Spleen (tissue), 13 donors: ENCODE measurements at regions of chr9 and their contacts with region 1.

Region 1: DNA sequence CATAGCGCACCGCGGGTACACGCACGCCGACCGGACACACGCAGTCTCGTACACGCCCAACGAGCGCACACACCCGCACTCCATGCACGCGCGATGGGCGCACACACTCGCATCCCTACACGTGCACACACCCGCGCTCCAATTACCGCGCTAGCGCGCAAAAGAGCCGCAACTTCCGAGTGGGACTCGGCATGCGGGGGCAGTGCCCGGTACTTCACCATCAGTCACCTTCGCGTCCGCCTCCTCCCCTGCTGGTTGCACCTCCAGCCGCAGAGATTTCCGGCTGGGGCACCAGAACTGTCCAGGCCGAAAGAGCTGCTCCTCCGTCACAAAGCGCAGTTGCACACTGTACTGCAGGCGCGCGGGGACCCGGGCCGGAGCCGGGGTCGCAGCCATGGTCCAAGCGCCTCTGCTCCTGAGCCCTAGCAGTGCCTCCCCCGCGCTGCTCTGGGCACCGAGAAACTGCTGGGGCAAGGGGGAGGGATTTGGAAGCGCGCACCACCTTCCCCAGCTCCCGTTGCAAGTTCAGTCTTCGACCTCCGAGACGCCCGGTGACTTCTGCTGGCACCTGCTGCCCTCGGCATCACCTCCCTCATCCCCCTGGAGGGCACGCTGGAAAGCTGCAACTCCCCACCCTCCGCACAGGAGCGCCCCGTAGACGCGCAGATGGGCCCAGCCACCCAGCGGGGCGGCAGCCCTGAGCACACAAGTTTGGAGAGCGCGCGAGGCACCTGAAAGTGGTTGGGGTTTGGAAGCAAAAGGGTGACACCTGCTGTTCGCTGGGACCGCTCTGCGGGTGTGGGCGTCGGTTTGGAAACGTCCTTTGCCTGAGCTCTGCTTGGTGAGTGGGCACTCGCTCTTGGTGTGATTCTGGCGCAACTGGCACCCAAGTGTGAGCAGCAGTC is 337.4 kb upstream of the PUM3 start:
- DNase-seq: no peak
- H3K4me3 ChIP-seq: peak overlapping the region in 4 of 8 donors; percentile 11 to 42 (median 16)
- H3K27ac ChIP-seq: no peak overlapping the region
- H3K4me1 ChIP-seq: peaks cover 3 to 15% (median 10%) of the 10 kb centered on the region in 6 donors
- H3K27me3 ChIP-seq: peaks cover 0 to 71% (median 21%) of the 10 kb centered on the region in 7 donors
- CTCF ChIP-seq: peak in 2 of 11 experiments; percentile 8 to 15
- POLR2A ChIP-seq: no peak

Region 2: DNA sequence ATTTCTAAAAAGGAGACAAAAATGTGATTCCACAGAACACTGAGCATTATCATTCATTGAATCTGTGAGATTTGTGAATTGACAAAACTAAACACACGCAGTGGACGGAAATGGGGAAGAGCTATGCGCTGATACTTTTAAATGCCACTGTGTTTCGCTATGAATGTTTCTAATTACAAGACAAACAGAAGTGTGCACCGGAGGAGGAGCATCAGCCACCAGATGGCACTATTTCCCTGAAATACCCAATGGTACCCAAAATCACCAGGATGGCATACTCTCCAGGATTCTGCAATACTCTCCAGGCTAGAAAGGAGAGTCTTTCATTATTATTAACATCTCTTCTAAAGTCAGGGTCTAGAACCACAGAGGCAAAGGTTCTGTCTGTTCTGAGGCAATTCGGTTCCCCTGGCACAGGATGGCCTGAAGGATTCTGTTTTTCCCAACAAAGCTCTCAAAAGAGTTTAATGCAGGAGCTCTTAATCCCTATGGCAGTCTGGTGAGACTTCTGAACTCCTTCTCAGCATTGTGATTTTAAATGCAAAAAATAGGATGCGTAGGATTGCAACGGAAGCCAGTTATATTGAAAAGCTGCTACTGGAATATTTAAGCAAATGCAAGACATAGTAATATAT is 323.6 kb before region 1 on chr9:
- intact Hi-C with region 1: loop called (anchors 5 kb)
- DNase-seq: no peak
- H3K4me3 ChIP-seq: no peak overlapping the region
- H3K27ac ChIP-seq: no peak overlapping the region
- H3K4me1 ChIP-seq: peaks cover 0 to 8% (median 1%) of the 10 kb centered on the region in 6 donors
- H3K27me3 ChIP-seq: peaks cover 0 to 17% (median 0%) of the 10 kb centered on the region in 7 donors
- CTCF ChIP-seq: peak; percentile 38 to 86 (median 76)
- POLR2A ChIP-seq: no peak

Region 3: DNA sequence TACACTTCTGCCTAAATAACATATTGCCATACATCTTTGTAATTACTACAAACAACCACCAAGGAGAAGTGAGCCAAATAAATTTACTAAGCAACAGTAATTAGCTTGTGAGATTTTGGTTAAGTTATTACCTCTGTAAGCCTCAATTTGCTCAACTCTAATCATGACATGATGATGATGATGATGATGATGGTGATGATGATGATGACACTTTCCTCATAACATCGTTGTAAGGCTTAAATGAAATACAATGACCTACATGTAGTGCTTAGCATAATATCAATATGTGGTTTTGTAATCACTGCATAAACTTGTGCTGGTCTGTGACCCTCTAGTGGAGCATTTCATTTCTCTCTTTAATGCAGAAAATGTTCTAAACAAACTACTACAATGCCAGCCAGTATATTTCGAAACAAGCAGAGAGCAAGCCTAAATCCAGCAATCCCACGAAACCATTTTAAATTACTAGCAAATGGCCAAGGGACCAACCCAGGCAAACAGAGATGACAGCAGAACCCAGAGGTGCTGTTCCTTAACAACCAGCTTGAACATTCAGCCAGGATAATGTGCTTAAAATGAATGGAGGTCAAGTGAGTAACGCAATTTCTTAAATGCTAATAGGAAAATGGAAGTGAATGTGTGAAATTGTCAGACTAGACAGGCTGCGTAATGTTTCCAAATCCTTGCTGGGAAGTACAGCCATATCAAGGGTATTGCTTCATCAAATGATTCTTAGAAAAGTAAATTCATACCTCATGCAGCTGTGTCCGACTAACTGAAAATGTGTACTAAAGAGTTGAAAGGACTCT is 55.5 kb before region 1 on chr9:
- intact Hi-C with region 1: no loop called
- DNase-seq: no peak
- H3K4me3 ChIP-seq: no peak overlapping the region
- H3K27ac ChIP-seq: no peak overlapping the region
- H3K4me1 ChIP-seq: no peaks in the 10 kb centered on the region
- H3K27me3 ChIP-seq: no peaks in the 10 kb centered on the region
- CTCF ChIP-seq: no peak
- POLR2A ChIP-seq: no peak